Thyroid gland (tissue), 4 donors: ENCODE measurements at regions of chr5 and their contacts with region 1.

Region 1: DNA sequence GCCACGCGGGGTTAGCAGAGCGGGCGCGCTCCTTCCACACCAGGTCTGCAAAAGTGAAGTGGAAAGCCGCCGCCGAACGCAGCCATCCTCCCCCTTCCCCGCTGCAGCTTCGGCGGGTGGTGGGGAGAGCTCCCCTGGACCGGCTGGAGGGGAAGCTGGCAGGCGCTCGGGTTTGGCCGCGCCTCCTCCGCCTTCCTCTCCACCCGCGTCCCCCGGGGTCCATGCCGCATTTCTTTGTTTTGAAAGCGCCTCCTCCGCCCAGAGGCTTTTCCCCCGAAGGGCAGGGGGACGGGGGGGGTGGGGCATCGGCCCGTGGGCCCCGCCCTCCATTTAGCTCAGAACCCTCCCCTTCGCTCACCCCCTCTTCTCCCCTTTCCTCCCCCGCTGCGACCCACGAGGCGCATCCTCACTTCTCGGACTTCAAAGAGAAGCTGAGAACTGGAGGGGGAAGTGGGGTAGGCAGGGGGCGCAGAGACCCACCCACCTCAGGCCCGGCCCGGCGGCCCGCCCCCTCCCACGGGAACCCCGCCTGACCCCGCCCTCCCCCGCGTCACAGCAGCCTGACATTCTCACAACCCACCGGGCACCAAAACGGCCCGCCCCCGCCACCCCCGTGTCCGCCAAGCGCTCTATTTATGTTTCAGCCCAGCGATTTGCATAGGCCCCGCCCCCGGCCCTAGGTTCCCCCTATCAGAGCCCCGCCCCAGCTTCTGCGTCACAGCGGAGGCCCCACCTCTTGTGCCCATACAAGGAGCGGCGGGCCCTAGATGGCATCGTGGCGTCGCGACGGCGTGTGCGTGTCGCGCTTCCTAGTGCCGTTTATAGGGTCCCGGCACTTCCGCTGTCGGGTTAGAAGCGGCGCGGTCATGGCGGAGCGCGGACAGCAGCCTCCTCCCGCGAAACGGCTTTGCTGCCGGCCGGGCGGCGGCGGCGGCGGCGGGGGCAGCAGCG is at the start of gene ZSWIM6:
- DNase-seq: peak; percentile 100
- H3K4me3 ChIP-seq: peak within 1 kb of the TSS; percentile 86 to 96 (median 93)
- H3K27ac ChIP-seq: peak within 1 kb of the TSS; percentile 86 to 97 (median 94)
- H3K4me1 ChIP-seq: peaks cover 0 to 32% of the 10 kb centered on the region in 2 donors
- H3K27me3 ChIP-seq: no peaks in the 10 kb centered on the region
- CTCF ChIP-seq: no peak
- POLR2A ChIP-seq: peak; percentile 98 to 100
- total RNA-seq, gene ZSWIM6: 11.8 to 20.1 (median 14.5) TPM

Region 2: GRCh38 chr5:61177716-61178115 is 154.0 kb before region 1 on chr5:
- intact Hi-C with region 1: loop called (anchors 5 kb)
- DNase-seq: no peak
- H3K4me3 ChIP-seq: no peak overlapping the region
- H3K27ac ChIP-seq: peak overlapping the region; percentile 31 to 73 (median 58)
- H3K4me1 ChIP-seq: peaks cover 26 to 44% of the 10 kb centered on the region in 2 donors
- H3K27me3 ChIP-seq: no peaks in the 10 kb centered on the region
- CTCF ChIP-seq: no peak
- POLR2A ChIP-seq: no peak

Region 3: DNA sequence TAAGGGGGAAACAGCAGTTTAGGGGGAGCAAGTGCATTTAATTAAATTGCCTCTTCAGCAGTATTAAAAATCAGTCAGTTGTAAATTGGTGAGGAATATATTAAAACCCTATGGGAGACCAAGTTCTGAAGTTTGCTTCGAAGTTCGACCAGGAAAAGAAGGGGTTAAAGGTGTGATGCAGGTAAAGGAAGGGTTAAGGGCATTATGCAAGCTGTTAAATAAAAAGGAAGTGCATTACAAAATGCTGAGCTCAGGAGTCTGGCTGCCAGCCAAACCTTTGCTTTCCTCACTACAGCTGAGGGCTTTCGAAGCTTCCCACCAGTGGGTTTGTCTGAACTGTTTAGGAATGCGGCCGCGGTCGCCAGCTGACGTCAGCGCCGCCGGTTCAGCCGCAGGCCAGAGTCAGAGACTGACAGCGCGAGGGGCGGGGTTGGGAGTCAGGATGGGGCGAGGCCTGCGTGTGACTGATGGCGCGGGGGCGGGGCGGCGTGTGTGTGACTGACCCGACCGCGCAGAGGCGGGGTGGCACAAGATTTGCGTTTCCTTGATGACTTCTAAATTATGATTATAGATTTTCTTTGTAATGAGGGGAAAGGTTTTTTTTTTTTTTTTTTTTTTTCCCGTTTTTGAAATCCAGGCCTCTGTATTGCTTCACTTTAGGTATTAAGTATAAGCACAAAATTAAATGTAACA is 76.9 kb after region 1 on chr5:
- intact Hi-C with region 1: loop called (anchors 5 kb)
- DNase-seq: peak; percentile 100
- H3K4me3 ChIP-seq: no peak overlapping the region
- H3K27ac ChIP-seq: peak overlapping the region; percentile 58 to 75 (median 67)
- H3K4me1 ChIP-seq: peaks cover 17 to 29% of the 10 kb centered on the region in 2 donors
- H3K27me3 ChIP-seq: no peaks in the 10 kb centered on the region
- CTCF ChIP-seq: no peak
- POLR2A ChIP-seq: peak in 1 of 2 donors; percentile 39

Region 4: DNA sequence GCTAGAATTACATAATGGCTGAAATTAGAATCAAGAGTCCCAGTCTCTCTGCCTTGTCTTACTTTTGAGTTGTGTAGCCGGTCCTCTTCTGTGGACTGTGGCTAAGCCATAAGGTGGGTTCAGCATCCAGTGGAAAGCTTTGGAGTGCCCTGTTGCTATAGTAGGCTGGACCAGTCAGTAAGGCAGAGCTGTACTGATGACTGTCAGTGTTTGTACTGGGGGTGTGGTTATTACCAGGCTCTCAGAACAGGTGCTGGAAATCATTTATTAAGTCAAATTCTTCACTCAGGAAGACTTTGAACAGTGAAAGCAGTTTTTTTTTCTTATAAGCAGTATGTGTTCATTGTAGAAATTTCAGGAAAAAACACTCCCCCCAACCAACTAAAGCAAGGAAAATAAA is 129.7 kb after region 1 on chr5:
- intact Hi-C with region 1: no loop called
- DNase-seq: no peak
- H3K4me3 ChIP-seq: no peak overlapping the region
- H3K27ac ChIP-seq: no peak overlapping the region
- H3K4me1 ChIP-seq: peaks cover 9% of the 10 kb centered on the region in 2 donors
- H3K27me3 ChIP-seq: no peaks in the 10 kb centered on the region
- CTCF ChIP-seq: no peak
- POLR2A ChIP-seq: no peak

Region 5: DNA sequence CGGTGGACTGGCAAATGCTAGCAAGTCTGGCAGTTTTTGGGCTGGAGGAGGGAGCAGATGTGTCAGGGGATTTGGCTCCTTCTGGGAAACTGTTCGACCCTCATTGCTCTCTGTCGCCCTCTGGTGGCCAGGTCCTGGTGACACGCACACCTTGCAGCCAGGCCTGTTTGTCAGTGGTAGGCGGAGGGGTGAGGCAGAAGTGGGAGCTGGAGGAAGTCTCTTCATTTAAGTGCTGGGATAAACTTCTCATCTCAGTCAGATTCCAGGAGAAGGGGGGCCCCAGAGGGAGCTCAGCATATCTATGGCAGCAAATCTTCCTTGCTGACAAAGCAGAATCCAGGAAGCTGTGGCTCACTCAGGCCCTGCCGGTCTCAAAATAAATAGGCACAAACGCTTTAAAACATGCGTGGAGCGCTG is 326.9 kb after region 1 on chr5:
- intact Hi-C with region 1: loop called (anchors 10 kb)
- DNase-seq: peak; percentile 85 to 93
- H3K4me3 ChIP-seq: no peak overlapping the region
- H3K27ac ChIP-seq: no peak overlapping the region
- H3K4me1 ChIP-seq: no peaks in the 10 kb centered on the region
- H3K27me3 ChIP-seq: no peaks in the 10 kb centered on the region
- CTCF ChIP-seq: peak; percentile 85 to 92 (median 89)
- POLR2A ChIP-seq: no peak